A673 (cell line): ENCODE measurements at regions of chr11 and their contacts with region 1.

Region 1: GRCh38 chr11:129930296-129930695 is 34.9 kb upstream of the NFRKB start:
- DNase-seq: no peak
- H3K4me3 ChIP-seq: no peak overlapping the region
- H3K27ac ChIP-seq: no peak overlapping the region
- H3K4me1 ChIP-seq: no peaks in the 10 kb centered on the region
- H3K27me3 ChIP-seq: no peaks in the 10 kb centered on the region
- CTCF ChIP-seq: no peak

Region 2: GRCh38 chr11:129895126-129896041 is 34.9 kb before region 1 on chr11 and contains the start of gene NFRKB:
- CTCF ChIA-PET with region 1: no interaction called
- POLR2A ChIA-PET with region 1: interaction called, 10 read pairs
- intact Hi-C with region 1: no loop called
- DNase-seq: peak; percentile 89
- H3K4me3 ChIP-seq: peak within 1 kb of the TSS; percentile 85
- H3K27ac ChIP-seq: peak within 1 kb of the TSS; percentile 80
- H3K4me1 ChIP-seq: peaks cover 7% of the 10 kb centered on the region
- H3K27me3 ChIP-seq: no peaks in the 10 kb centered on the region
- CTCF ChIP-seq: no peak
- total RNA-seq, gene NFRKB: 53.6 and 54.5 TPM in 2 replicates